Naive thymus-derived CD4-positive, alpha-beta T cell (primary cell): ENCODE measurements at regions of chr12 and their contacts with region 1.

Region 1: DNA sequence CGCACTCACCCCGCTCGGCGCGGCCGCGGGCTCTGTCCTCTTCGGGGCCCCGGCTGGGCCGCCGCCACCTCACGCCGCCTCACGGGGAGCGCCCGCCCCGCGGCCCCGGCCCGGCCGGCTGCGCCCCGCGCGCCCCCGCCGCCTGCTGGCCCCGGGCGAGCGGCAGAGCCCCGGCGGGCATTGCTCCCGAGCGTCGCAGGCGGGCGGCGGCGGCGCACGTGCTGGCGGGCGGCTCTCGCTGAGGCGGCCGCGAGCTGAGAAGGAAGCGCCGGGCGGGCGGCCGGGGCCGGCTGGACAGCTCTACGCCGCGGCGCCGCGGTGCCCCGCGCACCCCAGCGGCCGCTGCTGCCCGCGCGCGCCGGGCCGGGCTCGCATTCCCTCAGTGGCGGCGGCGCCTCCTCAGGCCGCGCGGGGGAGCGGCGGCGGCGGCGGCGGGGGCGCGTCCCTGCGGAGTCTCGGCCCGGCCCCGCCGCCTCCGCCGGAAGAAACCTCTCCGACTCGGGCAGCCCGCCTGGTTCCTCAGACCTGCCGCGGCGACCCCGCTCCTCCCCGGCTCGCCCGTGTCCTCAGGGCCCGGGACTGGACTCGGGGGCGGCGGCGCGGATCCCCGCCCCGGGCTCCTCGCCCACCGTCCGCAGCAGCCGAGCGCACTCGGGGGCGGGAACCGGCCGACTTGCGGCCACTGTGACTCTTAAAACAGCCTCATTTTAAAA is at the start of gene PITPNM2:
- DNase-seq: peak; percentile 44 to 78 (median 68)
- ATAC-seq: peak; percentile 90
- H3K4me3 ChIP-seq: peak within 1 kb of the TSS; percentile 74
- H3K4me3 Mint-ChIP-seq: peak within 1 kb of the TSS; percentile 83 to 95 (median 89)
- H3K27ac ChIP-seq: peak within 1 kb of the TSS; percentile 82
- H3K27ac Mint-ChIP-seq: peak within 1 kb of the TSS; percentile 80 to 92 (median 90)
- H3K4me1 ChIP-seq: peaks cover 6 to 29% of the 10 kb centered on the region in 2 donors
- H3K4me1 Mint-ChIP-seq: peaks cover 24 to 48% (median 40%) of the 10 kb centered on the region in 7 donors
- H3K27me3 ChIP-seq: no peaks in the 10 kb centered on the region
- H3K27me3 Mint-ChIP-seq: peaks cover 0 to 20% (median 0%) of the 10 kb centered on the region in 5 donors
- total RNA-seq, gene PITPNM2: 22.2 to 65.3 (median 56.6) TPM

Region 2: DNA sequence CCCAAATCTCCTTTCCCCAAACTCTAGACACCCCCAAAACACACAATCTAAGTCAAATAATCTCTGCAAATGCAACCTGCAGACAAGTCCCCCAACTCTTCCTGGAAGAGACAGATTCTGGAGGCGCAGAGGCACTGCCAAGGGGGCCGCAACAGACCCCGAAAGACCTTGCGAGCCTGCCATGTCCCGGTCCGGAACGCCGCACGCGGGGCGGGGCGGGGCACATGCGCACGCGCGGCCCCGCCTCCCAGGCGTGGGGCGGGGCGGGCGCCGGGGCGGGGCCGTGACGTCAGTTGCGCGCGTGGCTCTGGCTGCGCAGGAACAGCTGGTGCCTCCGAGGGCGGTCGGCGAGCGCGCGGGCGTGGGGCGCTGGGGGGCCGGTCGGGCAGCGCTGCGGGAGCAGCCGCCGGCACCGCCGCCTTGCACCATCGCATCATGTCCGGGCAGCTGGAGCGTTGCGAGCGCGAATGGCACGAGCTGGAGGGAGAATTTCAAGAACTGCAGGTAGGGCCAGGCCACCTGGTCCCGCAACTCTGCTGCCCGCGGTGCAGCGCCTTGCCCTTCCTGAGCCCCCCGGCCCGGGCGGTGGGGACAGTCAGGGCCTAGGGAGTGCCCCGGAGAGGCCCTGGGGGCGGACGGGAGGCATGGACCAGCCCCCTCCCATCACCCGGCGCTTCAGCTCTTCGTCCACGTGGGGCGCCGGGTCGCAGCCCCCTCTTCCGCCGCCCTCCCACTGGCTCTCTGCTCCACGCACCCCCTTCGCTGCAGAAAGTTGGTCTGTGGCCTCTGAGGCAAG is 1438.2 kb before region 1 on chr12 and contains the start of gene TMEM120B:
- CTCF ChIA-PET with region 1: no interaction called
- POLR2A ChIA-PET with region 1: no interaction called
- intact Hi-C with region 1: no loop called
- DNase-seq: peak; percentile 75 to 91 (median 86)
- ATAC-seq: peak; percentile 97
- H3K4me3 ChIP-seq: peak within 1 kb of the TSS; percentile 99
- H3K4me3 Mint-ChIP-seq: peak within 1 kb of the TSS; percentile 84 to 97 (median 94)
- H3K27ac ChIP-seq: peak within 1 kb of the TSS; percentile 82
- H3K27ac Mint-ChIP-seq: peak within 1 kb of the TSS; percentile 86 to 96 (median 92)
- H3K4me1 ChIP-seq: peaks cover 11 to 12% of the 10 kb centered on the region in 2 donors
- H3K4me1 Mint-ChIP-seq: peaks cover 7 to 37% (median 26%) of the 10 kb centered on the region in 7 donors
- H3K27me3 ChIP-seq: no peaks in the 10 kb centered on the region
- H3K27me3 Mint-ChIP-seq: no peaks in the 10 kb centered on the region
- total RNA-seq, gene TMEM120B: 7.3 to 14.3 (median 9.2) TPM

Region 3: GRCh38 chr12:122974274-122974891 is 176.5 kb before region 1 on chr12:
- CTCF ChIA-PET with region 1: no interaction called
- POLR2A ChIA-PET with region 1: interaction called, 3 read pairs
- intact Hi-C with region 1: loop called in 1 of 2 experiments (anchors 2 kb)
- DNase-seq: peak; percentile 92 to 98 (median 98)
- ATAC-seq: peak; percentile 92
- H3K4me3 ChIP-seq: peak overlapping the region; percentile 100
- H3K4me3 Mint-ChIP-seq: peak overlapping the region; percentile 92 to 99 (median 97)
- H3K27ac ChIP-seq: peak overlapping the region; percentile 98
- H3K27ac Mint-ChIP-seq: peak overlapping the region; percentile 99 to 100 (median 99)
- H3K4me1 ChIP-seq: peaks cover 18 to 23% of the 10 kb centered on the region in 2 donors
- H3K4me1 Mint-ChIP-seq: peaks cover 17 to 39% (median 30%) of the 10 kb centered on the region in 7 donors
- H3K27me3 ChIP-seq: no peaks in the 10 kb centered on the region
- H3K27me3 Mint-ChIP-seq: peaks cover 0 to 3% (median 0%) of the 10 kb centered on the region in 5 donors

Region 4: GRCh38 chr12:123043536-123044001 is 107.3 kb before region 1 on chr12:
- CTCF ChIA-PET with region 1: interaction called, 15 read pairs
- POLR2A ChIA-PET with region 1: interaction called, 4 read pairs
- intact Hi-C with region 1: loop called (anchors 1 to 2 kb)
- DNase-seq: peak; percentile 36 to 83 (median 71)
- ATAC-seq: peak; percentile 92
- H3K4me3 ChIP-seq: no peak overlapping the region
- H3K4me3 Mint-ChIP-seq: peak overlapping the region in 9 of 10 donors; percentile 13 to 69 (median 56)
- H3K27ac ChIP-seq: peak overlapping the region; percentile 38
- H3K27ac Mint-ChIP-seq: peak overlapping the region; percentile 40 to 95 (median 84)
- H3K4me1 ChIP-seq: peaks cover 10 to 17% of the 10 kb centered on the region in 2 donors
- H3K4me1 Mint-ChIP-seq: peaks cover 27 to 65% (median 52%) of the 10 kb centered on the region in 7 donors
- H3K27me3 ChIP-seq: no peaks in the 10 kb centered on the region
- H3K27me3 Mint-ChIP-seq: no peaks in the 10 kb centered on the region

Region 5: DNA sequence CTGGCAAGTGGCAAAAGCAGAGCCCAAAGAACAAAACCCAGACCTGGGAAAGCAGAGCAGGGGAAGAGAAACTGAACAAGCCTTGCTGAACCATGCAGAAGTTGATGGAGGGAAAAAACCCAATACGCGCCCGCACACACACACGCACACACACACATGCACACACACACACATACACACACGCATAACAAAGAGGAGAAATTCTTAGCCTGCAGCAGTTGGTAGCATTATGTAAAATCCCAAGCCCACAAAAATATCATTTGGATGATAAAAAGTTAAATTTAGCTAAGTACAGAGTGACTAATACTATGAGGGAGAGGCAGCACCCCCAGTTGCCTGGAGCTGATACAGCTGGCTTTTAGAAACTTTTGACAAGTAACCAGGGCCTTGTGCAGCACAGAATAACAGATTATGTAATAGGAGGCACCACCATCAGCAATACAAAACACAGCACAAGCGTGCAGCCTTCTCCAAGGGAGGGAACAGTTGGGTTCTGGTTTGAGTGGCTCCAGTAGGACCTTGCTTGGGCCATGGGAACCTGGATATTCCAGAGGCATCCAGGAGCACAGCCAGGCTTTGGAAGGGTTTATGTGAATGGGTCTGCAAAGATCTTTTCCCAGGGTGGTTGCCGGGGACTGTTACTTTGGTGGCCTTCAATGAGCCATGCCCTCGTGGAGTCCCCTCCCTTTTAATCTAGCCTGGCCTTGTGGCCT is 35.3 kb before region 1 on chr12:
- CTCF ChIA-PET with region 1: interaction called, 9 read pairs
- POLR2A ChIA-PET with region 1: interaction called, 70 read pairs
- intact Hi-C with region 1: loop called in 1 of 2 experiments (anchors 1 kb)
- DNase-seq: peak in 7 of 9 donors; percentile 54 to 79 (median 70)
- ATAC-seq: peak; percentile 78
- H3K4me3 ChIP-seq: no peak overlapping the region
- H3K4me3 Mint-ChIP-seq: peak overlapping the region; percentile 38 to 81 (median 74)
- H3K27ac ChIP-seq: peak overlapping the region; percentile 69
- H3K27ac Mint-ChIP-seq: peak overlapping the region; percentile 41 to 100 (median 95)
- H3K4me1 ChIP-seq: peaks cover 3 to 59% of the 10 kb centered on the region in 2 donors
- H3K4me1 Mint-ChIP-seq: peaks cover 40 to 92% (median 85%) of the 10 kb centered on the region in 7 donors
- H3K27me3 ChIP-seq: no peaks in the 10 kb centered on the region
- H3K27me3 Mint-ChIP-seq: no peaks in the 10 kb centered on the region

Region 6: DNA sequence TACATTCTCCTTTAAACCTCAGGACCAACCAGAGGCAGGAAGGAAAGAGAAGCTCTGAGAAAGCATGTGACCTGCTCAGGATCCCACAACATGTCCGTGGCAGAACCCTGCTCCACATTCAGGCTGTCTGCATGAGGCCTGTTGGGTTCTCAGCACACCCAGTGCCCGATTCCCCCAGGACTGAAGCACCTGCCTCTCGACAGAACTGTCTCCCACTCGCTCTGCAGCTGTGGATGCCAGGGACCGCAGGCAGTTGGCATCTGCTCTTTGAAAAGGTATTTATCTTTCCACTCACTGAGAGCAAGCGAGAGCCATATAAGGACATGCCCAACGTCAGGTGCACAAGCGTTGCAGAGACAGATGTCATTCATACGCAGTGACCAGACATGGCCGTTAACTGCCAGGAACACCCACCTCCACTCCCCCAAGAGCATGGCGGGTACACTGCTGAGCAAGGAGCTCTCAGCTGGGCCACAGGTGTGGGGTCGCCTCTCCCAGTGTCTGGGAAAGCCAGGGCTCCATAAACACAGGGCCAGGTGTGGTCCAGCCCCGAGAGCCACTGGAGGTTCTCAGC is 18.9 kb before region 1 on chr12:
- CTCF ChIA-PET with region 1: interaction called, 8 read pairs
- POLR2A ChIA-PET with region 1: interaction called, 5 read pairs
- intact Hi-C with region 1: loop called in 1 of 2 experiments (anchors 2 kb)
- DNase-seq: peak in 8 of 9 donors; percentile 34 to 83 (median 71)
- ATAC-seq: peak; percentile 96
- H3K4me3 ChIP-seq: peak overlapping the region; percentile 24
- H3K4me3 Mint-ChIP-seq: peak overlapping the region; percentile 75 to 83 (median 79)
- H3K27ac ChIP-seq: peak overlapping the region; percentile 84
- H3K27ac Mint-ChIP-seq: peak overlapping the region; percentile 89 to 98 (median 95)
- H3K4me1 ChIP-seq: peaks cover 0 to 27% of the 10 kb centered on the region in 2 donors
- H3K4me1 Mint-ChIP-seq: peaks cover 24 to 70% (median 55%) of the 10 kb centered on the region in 7 donors
- H3K27me3 ChIP-seq: no peaks in the 10 kb centered on the region
- H3K27me3 Mint-ChIP-seq: no peaks in the 10 kb centered on the region